Endothelial cell of umbilical vein (primary cell): ENCODE measurements at regions of chr3 and their contacts with region 1.

Region 1: GRCh38 chr3:142828703-142829305 is 60.1 kb downstream of the PCOLCE2 start:
- DNase-seq: peak; percentile 75
- H3K4me3 ChIP-seq: no peak overlapping the region
- H3K27ac ChIP-seq: no peak overlapping the region
- H3K4me1 ChIP-seq: no peaks in the 10 kb centered on the region
- H3K27me3 ChIP-seq: peaks cover 3 to 21% of the 10 kb centered on the region in 2 experiments
- CTCF ChIP-seq: peak; percentile 86
- POLR2A ChIP-seq: no peak

Region 2: GRCh38 chr3:142817897-142818296 is 10.9 kb before region 1 on chr3:
- CTCF ChIA-PET with region 1: interaction called, 30 read pairs
- POLR2A ChIA-PET with region 1: no interaction called
- dilution Hi-C with region 1: no loop called
- intact Hi-C with region 1: no loop called
- DNase-seq: no peak
- H3K4me3 ChIP-seq: no peak overlapping the region
- H3K27ac ChIP-seq: no peak overlapping the region
- H3K4me1 ChIP-seq: no peaks in the 10 kb centered on the region
- H3K27me3 ChIP-seq: peaks cover 14 to 24% of the 10 kb centered on the region in 2 experiments
- CTCF ChIP-seq: no peak
- POLR2A ChIP-seq: no peak

Region 3: DNA sequence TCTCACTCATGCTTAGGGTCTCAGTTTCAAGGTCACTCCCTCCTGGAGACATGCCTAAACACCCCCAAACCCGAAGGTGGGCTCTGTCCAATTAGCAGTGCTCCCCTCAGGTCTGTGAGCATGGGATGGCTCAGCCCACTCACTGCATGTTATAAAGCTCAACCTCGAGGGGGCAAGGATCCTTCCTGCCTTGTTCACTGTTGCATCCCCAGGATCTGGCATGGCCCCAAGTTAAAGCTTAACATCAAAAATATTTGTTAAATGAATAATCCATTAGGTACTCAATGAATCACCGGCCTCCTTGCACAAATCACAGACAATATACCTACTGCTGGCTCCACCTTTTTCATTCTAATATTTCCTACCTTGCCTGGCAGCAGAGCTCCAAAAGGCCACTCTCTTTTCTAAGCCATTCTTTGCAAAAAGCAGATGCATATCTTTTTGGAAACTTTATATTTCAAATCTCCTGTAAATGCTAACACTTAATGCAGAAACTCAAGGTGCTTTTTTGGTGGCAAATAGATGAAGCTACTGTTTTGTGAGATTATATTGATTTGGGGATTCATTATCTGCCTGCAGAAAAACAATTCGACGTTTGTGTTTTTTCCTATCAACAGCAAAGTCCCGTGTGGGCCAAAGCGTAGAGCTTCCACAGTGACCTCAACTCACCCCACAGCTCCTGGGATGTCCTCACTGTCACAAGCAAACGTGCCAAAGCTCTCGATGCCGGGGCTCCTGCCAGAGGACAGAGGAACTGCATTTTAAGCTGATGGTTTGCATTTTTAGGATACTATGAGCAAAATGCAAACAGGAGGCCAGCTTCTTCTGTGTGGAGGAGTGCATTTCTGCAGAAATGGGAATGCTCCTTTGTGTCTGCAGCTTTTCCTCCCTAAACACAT is 24.7 kb after region 1 on chr3:
- CTCF ChIA-PET with region 1: interaction called, 13 read pairs
- POLR2A ChIA-PET with region 1: no interaction called
- dilution Hi-C with region 1: no loop called
- intact Hi-C with region 1: no loop called
- DNase-seq: no peak
- H3K4me3 ChIP-seq: no peak overlapping the region
- H3K27ac ChIP-seq: no peak overlapping the region
- H3K4me1 ChIP-seq: no peaks in the 10 kb centered on the region
- H3K27me3 ChIP-seq: peaks cover 3 to 12% of the 10 kb centered on the region in 2 experiments
- CTCF ChIP-seq: no peak
- POLR2A ChIP-seq: no peak

Region 4: GRCh38 chr3:142987080-142987700 is 158.4 kb after region 1 on chr3:
- CTCF ChIA-PET with region 1: interaction called, 50 read pairs
- POLR2A ChIA-PET with region 1: no interaction called
- dilution Hi-C with region 1: no loop called
- intact Hi-C with region 1: loop called (anchors 1 kb)
- DNase-seq: peak; percentile 51
- H3K4me3 ChIP-seq: no peak overlapping the region
- H3K27ac ChIP-seq: no peak overlapping the region
- H3K4me1 ChIP-seq: no peaks in the 10 kb centered on the region
- H3K27me3 ChIP-seq: peaks cover 8 to 15% of the 10 kb centered on the region in 2 experiments
- CTCF ChIP-seq: peak; percentile 37
- POLR2A ChIP-seq: no peak

Region 5: GRCh38 chr3:143001369-143002082 is 172.7 kb after region 1 on chr3 and contains the start of gene U2SURP:
- CTCF ChIA-PET with region 1: interaction called, 94 read pairs
- POLR2A ChIA-PET with region 1: no interaction called
- dilution Hi-C with region 1: no loop called
- intact Hi-C with region 1: no loop called
- DNase-seq: peak; percentile 98
- H3K4me3 ChIP-seq: peak within 1 kb of the TSS; percentile 73 to 93 (median 92)
- H3K27ac ChIP-seq: peak within 1 kb of the TSS; percentile 72
- H3K4me1 ChIP-seq: peaks cover 16% of the 10 kb centered on the region
- H3K27me3 ChIP-seq: peaks cover 0 to 2% of the 10 kb centered on the region in 2 experiments
- CTCF ChIP-seq: no peak
- POLR2A ChIP-seq: peak; percentile 84
- total RNA-seq, gene U2SURP: 85.2 and 92.4 TPM in 2 replicates

Region 6: GRCh38 chr3:143627336-143627735 is 798.5 kb after region 1 on chr3:
- CTCF ChIA-PET with region 1: no interaction called
- POLR2A ChIA-PET with region 1: no interaction called
- dilution Hi-C with region 1: no loop called
- intact Hi-C with region 1: no loop called
- DNase-seq: no peak
- H3K4me3 ChIP-seq: no peak overlapping the region
- H3K27ac ChIP-seq: no peak overlapping the region
- H3K4me1 ChIP-seq: no peaks in the 10 kb centered on the region
- H3K27me3 ChIP-seq: no peaks in the 10 kb centered on the region
- CTCF ChIP-seq: no peak
- POLR2A ChIP-seq: no peak